HCT116 (cell line): ENCODE measurements at regions of chr13 and their contacts with region 1.

Region 1: GRCh38 chr13:60990032-60990733 is 425.5 kb downstream of the PCDH20 start:
- DNase-seq: no peak
- ATAC-seq: peak; percentile 59; the same call in 1 of the 2 replicates
- H3K4me3 ChIP-seq: no peak overlapping the region
- H3K27ac ChIP-seq: no peak overlapping the region
- H3K4me1 ChIP-seq: no peaks in the 10 kb centered on the region
- H3K27me3 ChIP-seq: no peaks in the 10 kb centered on the region
- CTCF ChIP-seq: peak; percentile 11 to 40 (median 36); a peak in 3 of 6 replicates
- POLR2A ChIP-seq: no peak
- RAD21 ChIP-seq: peak; percentile 21; the same call in 1 of the 2 replicates

Region 2: DNA sequence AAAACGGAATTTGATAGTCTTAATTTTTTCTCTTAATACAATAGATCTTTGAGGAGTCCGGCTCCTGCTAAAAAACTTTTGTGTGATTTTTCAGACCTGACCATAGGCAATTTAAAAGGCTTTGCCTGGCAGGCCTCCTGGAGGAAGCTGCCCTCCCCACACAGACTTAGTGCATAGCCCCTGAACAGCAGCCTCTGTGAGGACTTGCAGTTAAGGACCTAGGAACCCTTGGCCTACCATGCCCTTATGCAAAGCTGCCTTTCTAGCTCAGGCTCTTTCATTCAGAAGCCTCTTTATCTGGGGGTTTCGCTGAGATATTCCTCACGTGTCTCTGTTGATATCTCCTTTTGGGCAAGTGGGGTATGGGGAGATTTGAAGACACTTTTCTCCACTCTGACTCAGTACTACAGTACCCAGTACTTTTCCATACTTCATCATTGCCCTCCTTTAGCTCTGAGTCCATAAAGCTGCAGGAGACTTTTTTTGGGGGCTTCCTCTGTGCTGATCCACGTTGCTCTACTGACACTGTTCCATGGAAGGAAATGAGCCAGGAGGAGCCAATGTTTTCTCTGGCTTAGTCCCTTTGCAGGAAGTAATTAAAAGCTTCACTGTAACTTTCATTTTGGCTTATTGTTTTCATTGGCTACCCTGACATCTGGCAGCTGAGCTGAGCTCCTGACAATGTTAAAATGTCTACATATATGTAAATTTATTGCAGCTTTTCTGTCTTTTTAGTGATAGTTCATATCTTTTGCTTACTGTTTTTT is 310.1 kb before region 1 on chr13:
- CTCF ChIA-PET with region 1: no interaction called
- POLR2A ChIA-PET with region 1: no interaction called
- RAD21 ChIA-PET with region 1: no interaction called
- intact Hi-C with region 1: loop called (anchors 10 kb)
- DNase-seq: no peak
- ATAC-seq: no peak
- H3K4me3 ChIP-seq: no peak overlapping the region
- H3K27ac ChIP-seq: no peak overlapping the region
- H3K4me1 ChIP-seq: no peaks in the 10 kb centered on the region
- H3K27me3 ChIP-seq: no peaks in the 10 kb centered on the region; the same call in 1 of the 2 replicates
- CTCF ChIP-seq: no peak
- POLR2A ChIP-seq: no peak
- RAD21 ChIP-seq: no peak